ENCODE measurements at regions of chr12 and their contacts with region 1.

Region 1: GRCh38 chr12:42568952-42569915 is 20.3 kb downstream of the PRICKLE1 start:
- DNase-seq: no peak
- ATAC-seq: peak; percentile 91
- H3K4me3 ChIP-seq: no peak overlapping the region
- H3K27ac ChIP-seq: no peak overlapping the region
- H3K4me1 ChIP-seq: peaks cover 3 to 10% of the 10 kb centered on the region in 2 donors
- H3K27me3 ChIP-seq: no peaks in the 10 kb centered on the region
- CTCF ChIP-seq: peak; percentile 35 to 52

Region 2: DNA sequence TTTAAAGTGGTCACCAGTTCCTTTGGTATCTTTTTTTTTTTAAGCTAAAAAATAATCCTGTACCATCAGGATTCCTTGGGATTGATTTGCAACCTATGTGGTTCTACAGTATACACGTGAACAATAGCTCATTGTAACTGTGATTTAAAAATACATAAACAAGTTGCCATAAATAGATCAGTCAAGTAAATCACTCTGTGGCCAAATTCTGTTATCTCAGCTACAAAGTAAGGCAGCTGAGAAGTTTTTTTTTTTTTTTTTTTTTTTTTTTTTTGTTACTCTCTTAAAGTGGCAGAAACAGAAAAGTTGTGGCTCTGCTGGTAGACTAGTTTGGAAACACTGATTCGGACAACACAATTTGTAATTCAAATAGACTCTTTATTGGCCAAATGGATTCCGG is 84.2 kb before region 1 on chr12:
- intact Hi-C with region 1: loop called in 1 of 2 experiments (anchors 5 kb)
- DNase-seq: no peak
- ATAC-seq: no peak
- H3K4me3 ChIP-seq: no peak overlapping the region
- H3K27ac ChIP-seq: no peak overlapping the region
- H3K4me1 ChIP-seq: peaks cover 16 to 29% of the 10 kb centered on the region in 2 donors
- H3K27me3 ChIP-seq: peaks cover 0 to 46% of the 10 kb centered on the region in 2 donors
- CTCF ChIP-seq: no peak

Measured in left lung (tissue), 14 donors.